Mammary epithelial cell (primary cell): ENCODE measurements at regions of chr10 and their contacts with region 1.

Region 1: DNA sequence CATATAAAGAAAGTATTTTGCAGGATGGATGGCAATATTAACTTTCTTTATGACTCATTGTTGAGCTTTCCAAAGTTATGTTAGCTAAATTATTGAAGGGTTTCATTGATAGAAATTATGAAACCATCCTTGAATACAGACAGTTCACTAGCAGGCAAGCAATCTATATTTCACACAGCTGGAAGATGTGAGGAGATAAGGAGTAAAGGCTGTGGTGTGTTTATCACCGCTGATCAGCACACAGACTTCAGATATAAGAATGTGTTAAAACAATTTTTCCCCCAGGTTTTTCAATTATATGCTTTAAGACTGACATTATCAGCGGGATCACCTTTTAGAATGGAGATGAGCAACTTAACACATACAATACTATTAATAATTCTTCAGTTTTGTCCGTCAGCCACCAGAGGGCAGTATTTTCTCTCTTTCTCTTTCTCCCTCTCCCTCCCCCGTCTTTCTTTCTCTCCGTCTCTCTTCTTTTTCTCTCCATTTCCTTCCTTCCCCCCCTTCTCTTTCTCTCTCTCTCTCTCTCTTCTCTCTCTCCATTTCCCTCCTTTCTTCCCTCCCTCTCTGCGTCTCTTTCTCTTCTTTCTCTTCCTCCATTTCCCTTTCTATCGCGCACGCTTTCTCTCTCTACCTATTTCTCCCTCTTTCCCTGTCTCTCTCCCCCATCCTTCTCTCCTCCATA is 62.9 kb upstream of the FAM171A1 start:
- DNase-seq: peak; percentile 25
- H3K4me3 ChIP-seq: peak overlapping the region; percentile 44 to 55 (median 45)
- H3K27ac ChIP-seq: no peak overlapping the region
- H3K4me1 ChIP-seq: no peaks in the 10 kb centered on the region
- H3K27me3 ChIP-seq: no peaks in the 10 kb centered on the region
- CTCF ChIP-seq: peak; percentile 61 to 65

Region 2: DNA sequence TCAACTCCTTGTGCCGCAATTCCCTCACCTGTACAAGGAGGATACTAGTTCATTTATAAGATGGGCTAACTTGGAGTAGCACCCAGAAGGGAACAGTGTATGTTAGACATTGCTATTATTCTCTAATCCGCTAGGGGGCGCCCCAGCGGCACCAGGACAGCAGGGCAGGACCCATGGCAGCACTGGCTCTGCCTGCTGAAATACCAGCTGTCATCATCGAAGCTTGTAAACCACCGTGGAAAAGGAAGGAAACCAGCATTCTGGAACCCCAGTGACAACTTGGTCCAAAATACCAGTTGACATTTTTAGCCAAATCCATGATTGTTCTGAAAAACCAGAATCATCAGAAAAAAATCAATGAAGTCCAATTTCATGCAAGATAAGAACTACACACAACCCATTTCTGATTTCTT is 151.3 kb after region 1 on chr10:
- CTCF ChIA-PET with region 1: no interaction called
- dilution Hi-C with region 1: no loop called
- in situ Hi-C with region 1: no loop called
- intact Hi-C with region 1: loop called (anchors 1 kb)
- DNase-seq: peak; percentile 20
- H3K4me3 ChIP-seq: no peak overlapping the region
- H3K27ac ChIP-seq: no peak overlapping the region
- H3K4me1 ChIP-seq: no peaks in the 10 kb centered on the region
- H3K27me3 ChIP-seq: no peaks in the 10 kb centered on the region
- CTCF ChIP-seq: peak; percentile 64 to 65

Region 3: GRCh38 chr10:15715619-15716227 is 281.7 kb after region 1 on chr10:
- CTCF ChIA-PET with region 1: no interaction called
- dilution Hi-C with region 1: no loop called
- in situ Hi-C with region 1: no loop called
- intact Hi-C with region 1: loop called (anchors 1 kb)
- DNase-seq: no peak
- H3K4me3 ChIP-seq: no peak overlapping the region
- H3K27ac ChIP-seq: no peak overlapping the region
- H3K4me1 ChIP-seq: no peaks in the 10 kb centered on the region
- H3K27me3 ChIP-seq: peaks cover 20% of the 10 kb centered on the region
- CTCF ChIP-seq: peak; percentile 23 to 37

Region 4: GRCh38 chr10:15725603-15726002 is 291.6 kb after region 1 on chr10:
- CTCF ChIA-PET with region 1: no interaction called
- dilution Hi-C with region 1: no loop called
- in situ Hi-C with region 1: loop called (anchors 5 kb)
- intact Hi-C with region 1: loop called (anchors 1 kb)
- DNase-seq: peak; percentile 32
- H3K4me3 ChIP-seq: no peak overlapping the region
- H3K27ac ChIP-seq: no peak overlapping the region
- H3K4me1 ChIP-seq: no peaks in the 10 kb centered on the region
- H3K27me3 ChIP-seq: peaks cover 4% of the 10 kb centered on the region
- CTCF ChIP-seq: peak; percentile 43 to 71

Region 5: DNA sequence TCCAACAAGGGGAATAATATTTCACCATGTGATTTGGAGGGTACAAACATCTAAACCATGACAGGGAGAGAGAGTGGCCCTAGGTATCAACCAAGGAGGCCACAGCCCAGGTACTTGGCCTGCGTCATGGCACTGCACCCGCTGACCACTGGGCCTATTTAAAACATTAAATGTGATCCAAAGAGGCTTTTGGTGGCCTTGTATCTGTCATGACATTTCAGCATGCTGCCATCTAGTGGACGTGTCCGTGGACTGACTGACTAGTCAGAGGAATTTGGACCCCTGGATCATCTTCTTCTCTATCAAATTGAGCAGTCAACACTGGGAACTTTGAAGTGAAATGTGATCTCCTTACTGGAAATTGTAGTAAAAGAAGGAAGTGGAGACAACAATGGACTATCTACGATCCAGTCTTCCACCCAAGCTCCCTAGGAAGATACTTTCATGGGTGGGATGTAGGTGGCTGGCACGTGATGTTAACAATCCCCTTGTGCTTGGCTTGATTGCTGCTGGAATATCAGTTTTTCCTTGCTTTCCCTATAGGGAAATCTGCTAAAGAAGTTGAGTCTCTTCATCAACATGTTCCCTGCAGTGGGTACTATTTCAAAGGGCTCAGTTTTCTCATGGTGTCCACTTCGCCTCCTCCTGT is 310.3 kb after region 1 on chr10:
- CTCF ChIA-PET with region 1: no interaction called
- dilution Hi-C with region 1: no loop called
- in situ Hi-C with region 1: no loop called
- intact Hi-C with region 1: loop called (anchors 1 kb)
- DNase-seq: peak; percentile 25
- H3K4me3 ChIP-seq: no peak overlapping the region
- H3K27ac ChIP-seq: no peak overlapping the region
- H3K4me1 ChIP-seq: no peaks in the 10 kb centered on the region
- H3K27me3 ChIP-seq: no peaks in the 10 kb centered on the region
- CTCF ChIP-seq: peak; percentile 56 to 57

Region 6: DNA sequence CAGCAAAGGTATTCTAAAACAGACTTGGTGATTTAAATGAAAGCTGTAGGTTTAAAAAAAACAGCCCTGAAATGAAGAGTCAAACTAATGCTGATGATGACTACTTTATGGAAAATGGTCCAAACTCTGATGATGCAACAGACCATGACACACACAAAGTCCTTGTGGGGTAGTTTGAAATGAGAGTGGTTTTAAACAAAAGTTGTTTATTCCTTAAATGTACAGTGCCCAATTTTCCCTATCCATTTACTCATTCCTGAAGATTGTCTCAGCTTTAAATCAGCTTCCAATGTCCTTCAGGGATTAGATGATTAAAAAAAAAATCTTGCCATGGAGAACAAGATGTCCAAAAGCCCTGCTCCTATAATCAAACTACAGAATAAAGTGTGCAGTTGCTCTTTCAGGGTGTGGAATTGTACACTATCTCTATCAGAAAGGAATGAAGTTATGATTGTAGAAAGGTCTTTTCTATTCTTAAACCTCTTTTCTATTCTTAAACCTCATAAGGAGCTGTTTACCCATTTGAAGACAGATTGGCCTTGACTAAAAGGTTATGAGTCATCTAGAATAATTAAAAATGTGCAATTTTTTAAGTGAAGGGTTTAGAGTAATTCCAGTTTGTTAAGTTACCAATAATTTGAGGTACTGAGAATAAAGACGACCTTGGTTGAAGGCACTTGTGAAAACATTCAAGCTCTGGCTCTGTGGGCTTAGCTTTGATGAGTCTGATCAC is 356.0 kb after region 1 on chr10:
- CTCF ChIA-PET with region 1: no interaction called
- dilution Hi-C with region 1: no loop called
- in situ Hi-C with region 1: no loop called
- intact Hi-C with region 1: no loop called
- DNase-seq: peak; percentile 41
- H3K4me3 ChIP-seq: no peak overlapping the region
- H3K27ac ChIP-seq: no peak overlapping the region
- H3K4me1 ChIP-seq: no peaks in the 10 kb centered on the region
- H3K27me3 ChIP-seq: no peaks in the 10 kb centered on the region
- CTCF ChIP-seq: no peak

Region 7: GRCh38 chr10:15824498-15824897 is 390.5 kb after region 1 on chr10:
- CTCF ChIA-PET with region 1: no interaction called
- dilution Hi-C with region 1: no loop called
- in situ Hi-C with region 1: no loop called
- intact Hi-C with region 1: loop called (anchors 2 kb)
- DNase-seq: no peak
- H3K4me3 ChIP-seq: no peak overlapping the region
- H3K27ac ChIP-seq: no peak overlapping the region
- H3K4me1 ChIP-seq: no peaks in the 10 kb centered on the region
- H3K27me3 ChIP-seq: no peaks in the 10 kb centered on the region
- CTCF ChIP-seq: peak; percentile 33 to 43